Activated CD4-positive, alpha-beta T cell treated with anti-CD3 and anti-CD28 coated beads, Interleukin-2, amount 10 ng/mL, durations not matched to agents 24 days and 14 days (primary cell): ENCODE measurements at regions of chr12 and their contacts with region 1.

Region 1: DNA sequence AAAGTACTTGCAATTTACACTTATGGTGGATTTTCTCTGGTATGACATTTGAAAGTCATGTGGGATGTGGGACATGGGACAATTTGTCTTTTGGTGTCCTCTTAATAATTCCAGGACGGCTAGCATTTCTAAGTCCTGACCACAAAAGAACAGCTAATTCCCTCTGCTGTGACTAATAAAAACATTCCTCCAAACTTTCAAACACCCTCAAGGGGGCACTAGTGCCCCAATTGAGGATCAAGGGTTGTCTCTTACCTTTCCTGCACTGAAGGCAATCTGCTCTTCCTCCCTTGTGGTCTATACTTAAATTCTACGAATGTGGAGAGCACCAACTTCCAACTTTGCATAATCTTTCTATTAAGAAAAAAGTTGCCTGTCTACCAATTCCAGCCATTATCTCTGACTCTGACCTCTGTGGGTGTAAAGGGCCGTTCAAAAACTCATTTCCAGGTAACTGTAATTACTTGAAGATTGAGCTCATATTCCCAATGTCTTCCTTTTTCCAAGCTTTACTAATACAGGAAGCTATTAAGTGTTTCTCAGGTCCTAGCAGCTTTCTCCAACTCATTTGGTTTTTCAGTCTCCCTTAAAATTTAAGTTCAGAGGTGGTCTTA is 210.2 kb downstream of the PTPRO start:
- DNase-seq: peak; percentile 89
- H3K4me3 Mint-ChIP-seq: no peak overlapping the region
- H3K27ac Mint-ChIP-seq: no peak overlapping the region
- H3K4me1 Mint-ChIP-seq: peaks cover 13% of the 10 kb centered on the region
- H3K27me3 Mint-ChIP-seq: peaks cover 18% of the 10 kb centered on the region

Region 2: GRCh38 chr12:15563663-15564062 is 31.2 kb after region 1 on chr12:
- intact Hi-C with region 1: loop called (anchors 1 kb)
- DNase-seq: peak; percentile 80
- H3K4me3 Mint-ChIP-seq: peak overlapping the region; percentile 82
- H3K27ac Mint-ChIP-seq: peak overlapping the region; percentile 94
- H3K4me1 Mint-ChIP-seq: peaks cover 65% of the 10 kb centered on the region
- H3K27me3 Mint-ChIP-seq: no peaks in the 10 kb centered on the region

Region 3: DNA sequence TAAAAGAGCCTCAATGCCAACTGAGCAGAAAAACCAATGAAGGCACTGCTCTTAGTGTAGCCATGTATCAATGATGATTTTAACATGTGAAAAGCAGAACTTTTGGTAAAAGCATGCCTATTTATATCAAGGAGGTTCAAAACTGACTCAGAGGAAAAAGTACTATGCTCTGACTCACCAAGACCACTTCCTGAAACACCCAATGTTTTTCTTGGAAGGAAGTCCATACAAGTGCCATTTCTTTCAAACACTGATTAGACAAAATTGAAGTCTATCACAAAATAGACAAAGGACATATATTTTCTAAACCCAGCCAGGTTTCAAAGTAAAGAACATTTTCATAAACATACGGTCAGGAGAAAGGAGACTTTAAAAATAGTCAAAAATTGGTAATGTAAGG is 168.1 kb after region 1 on chr12:
- intact Hi-C with region 1: loop called (anchors 2 kb)
- DNase-seq: peak; percentile 74
- H3K4me3 Mint-ChIP-seq: peak overlapping the region; percentile 77
- H3K27ac Mint-ChIP-seq: peak overlapping the region; percentile 95
- H3K4me1 Mint-ChIP-seq: peaks cover 33% of the 10 kb centered on the region
- H3K27me3 Mint-ChIP-seq: no peaks in the 10 kb centered on the region

Region 4: GRCh38 chr12:15856097-15856982 is 323.9 kb after region 1 on chr12:
- intact Hi-C with region 1: loop called (anchors 1 kb)
- DNase-seq: peak; percentile 88
- H3K4me3 Mint-ChIP-seq: no peak overlapping the region
- H3K27ac Mint-ChIP-seq: no peak overlapping the region
- H3K4me1 Mint-ChIP-seq: no peaks in the 10 kb centered on the region
- H3K27me3 Mint-ChIP-seq: peaks cover 28% of the 10 kb centered on the region